Activated CD4-positive, alpha-beta T cell treated with anti-CD3 and anti-CD28 coated beads, Interleukin-2, amount 10 ng/mL, durations not matched to agents 24 days and 14 days (primary cell): ENCODE measurements at regions of chr12 and their contacts with region 1.

Region 1: DNA sequence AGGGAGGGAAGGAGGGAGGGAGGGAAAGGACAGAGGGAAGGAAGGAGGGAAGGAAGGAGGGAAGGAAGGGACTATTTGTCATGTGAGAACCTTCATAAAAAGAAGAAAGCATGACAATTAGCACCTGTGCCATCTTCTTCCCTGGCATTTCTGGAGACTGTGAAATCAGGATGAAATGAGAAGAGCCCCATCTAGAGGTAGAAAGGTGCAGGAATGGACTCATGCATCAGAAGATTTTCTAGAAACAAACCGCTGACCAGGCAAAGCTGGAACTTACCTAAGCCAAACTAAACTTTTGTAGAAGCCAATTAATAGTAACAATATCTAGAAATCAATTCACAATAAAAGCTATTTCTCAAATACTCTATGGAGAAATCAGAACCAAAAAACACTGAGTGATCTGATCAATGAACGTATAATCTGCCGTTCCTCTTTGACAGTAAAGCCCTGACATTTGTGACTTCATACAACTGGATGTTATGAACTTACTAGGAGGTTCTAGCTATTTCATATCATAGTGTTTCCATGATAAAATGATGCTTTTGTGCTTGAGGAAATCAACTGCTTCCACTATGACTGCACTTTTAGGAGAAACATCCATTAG is 24.4 kb upstream of the CRACR2A start:
- DNase-seq: peak; percentile 72
- H3K4me3 Mint-ChIP-seq: no peak overlapping the region
- H3K27ac Mint-ChIP-seq: no peak overlapping the region
- H3K4me1 Mint-ChIP-seq: peaks cover 6% of the 10 kb centered on the region
- H3K27me3 Mint-ChIP-seq: peaks cover 6% of the 10 kb centered on the region

Region 2: DNA sequence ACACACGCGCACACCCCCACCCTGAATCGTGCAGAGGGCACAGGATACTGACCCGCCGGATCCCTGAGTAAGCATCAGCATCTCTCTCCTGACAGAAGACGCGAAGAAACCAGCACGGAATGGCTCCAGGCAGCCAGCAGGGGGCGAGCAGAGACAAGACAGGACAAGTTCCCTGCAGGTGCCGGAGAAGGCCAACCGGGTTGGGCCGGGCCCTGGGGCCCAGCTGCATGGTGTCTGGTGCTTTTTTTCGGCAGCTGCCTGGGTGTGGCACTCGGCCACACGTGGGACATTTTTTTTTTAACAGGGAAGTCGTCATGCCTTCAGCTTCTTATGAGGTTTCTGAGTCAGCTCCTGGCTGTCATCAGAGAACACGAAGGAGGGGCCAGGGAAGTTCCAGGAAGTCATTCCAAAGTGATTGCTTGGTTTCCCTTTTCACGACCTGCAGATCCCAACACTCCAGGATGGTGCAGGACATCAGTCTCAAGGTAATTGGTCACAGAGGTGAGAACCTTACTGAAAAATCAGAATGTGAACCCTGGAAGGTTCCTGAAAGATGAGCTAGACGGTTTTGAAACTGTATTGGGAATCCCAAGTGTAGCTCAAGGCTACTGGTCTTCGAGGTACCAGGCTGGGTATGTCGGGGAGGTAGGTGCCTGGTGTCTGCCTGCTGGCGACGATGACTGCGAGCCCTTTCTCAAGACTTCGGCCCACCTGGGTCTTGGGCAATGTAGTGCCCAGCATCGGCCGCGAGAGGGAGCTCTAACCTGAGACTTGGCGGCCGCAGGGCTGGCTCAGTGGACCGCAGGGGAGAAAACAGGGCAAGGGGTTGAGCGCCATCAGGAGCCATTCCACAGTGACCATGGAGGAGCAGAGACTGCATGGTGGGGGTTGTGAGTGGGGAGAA is 477.1 kb before region 1 on chr12:
- intact Hi-C with region 1: loop called (anchors 1 kb)
- DNase-seq: peak; percentile 94
- H3K4me3 Mint-ChIP-seq: peak overlapping the region; percentile 64
- H3K27ac Mint-ChIP-seq: peak overlapping the region; percentile 78
- H3K4me1 Mint-ChIP-seq: peaks cover 11% of the 10 kb centered on the region
- H3K27me3 Mint-ChIP-seq: peaks cover 3% of the 10 kb centered on the region

Region 3: DNA sequence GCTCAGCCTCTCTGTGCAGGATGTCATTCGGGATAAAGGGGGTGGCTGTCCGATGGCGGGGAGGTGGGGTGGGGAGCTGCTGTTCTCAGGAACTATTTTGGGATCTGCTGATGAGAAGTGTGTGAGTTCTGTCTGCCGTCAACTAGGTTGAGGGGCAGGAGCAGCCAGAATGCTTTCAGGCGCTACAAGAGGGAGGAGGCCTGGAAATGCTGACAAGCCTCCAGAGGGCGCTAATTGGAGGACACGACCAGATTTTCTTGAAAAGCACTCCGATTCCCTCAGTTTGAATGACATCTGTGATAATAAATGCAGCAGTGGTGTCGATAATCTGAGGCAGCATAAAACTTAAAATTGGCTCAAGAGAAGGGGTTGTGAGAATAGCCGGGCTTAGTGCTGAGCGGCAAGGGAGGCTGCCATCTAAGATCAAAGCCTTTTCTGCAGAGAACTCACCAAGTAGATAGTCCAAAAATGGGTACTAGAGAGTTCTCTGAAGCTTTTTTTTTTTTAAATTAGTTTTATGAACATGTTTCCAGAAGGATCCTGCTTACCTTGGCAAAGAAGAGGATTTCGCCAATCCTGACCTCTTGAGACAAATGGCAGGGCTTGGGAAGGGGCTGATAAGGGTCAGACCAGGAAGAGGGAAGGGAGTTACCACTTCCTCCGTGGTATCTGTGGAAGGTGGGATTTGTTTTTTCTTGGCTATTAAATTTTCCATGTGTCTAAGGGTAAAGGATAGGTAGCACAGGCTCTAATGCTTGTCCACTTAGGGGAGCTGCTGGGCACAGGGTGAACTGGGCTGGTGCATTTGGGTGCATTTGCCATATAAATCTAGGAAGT is 118.8 kb before region 1 on chr12:
- intact Hi-C with region 1: loop called (anchors 1 kb)
- DNase-seq: peak; percentile 78
- H3K4me3 Mint-ChIP-seq: no peak overlapping the region
- H3K27ac Mint-ChIP-seq: no peak overlapping the region
- H3K4me1 Mint-ChIP-seq: no peaks in the 10 kb centered on the region
- H3K27me3 Mint-ChIP-seq: no peaks in the 10 kb centered on the region

Region 4: GRCh38 chr12:3931746-3932145 is 154.4 kb after region 1 on chr12:
- intact Hi-C with region 1: no loop called
- DNase-seq: no peak
- H3K4me3 Mint-ChIP-seq: no peak overlapping the region
- H3K27ac Mint-ChIP-seq: no peak overlapping the region
- H3K4me1 Mint-ChIP-seq: peaks cover 54% of the 10 kb centered on the region
- H3K27me3 Mint-ChIP-seq: peaks cover 6% of the 10 kb centered on the region